SK-N-SH (cell line): ENCODE measurements at regions of chr2 and their contacts with region 1.

Region 1: GRCh38 chr2:117814417-117815264 is at the start of gene DDX18:
- DNase-seq: peak; percentile 88
- H3K4me3 ChIP-seq: peak within 1 kb of the TSS; percentile 88
- H3K27ac ChIP-seq: peak within 1 kb of the TSS; percentile 81
- H3K4me1 ChIP-seq: peaks cover 0 to 14% of the 10 kb centered on the region in 2 experiments; a peak in 2 of 4 replicates
- H3K27me3 ChIP-seq: no peaks in the 10 kb centered on the region
- CTCF ChIP-seq: peak; percentile 99
- EP300 ChIP-seq: peak in 1 of 2 experiments; percentile 23; a peak in 2 of 4 replicates
- RAD21 ChIP-seq: peak; percentile 71
- polyA plus RNA-seq, gene DDX18: 24.1 and 40.6 TPM in 2 replicates

Region 2: GRCh38 chr2:117801826-117802225 is 12.8 kb before region 1 on chr2:
- CTCF ChIA-PET with region 1: interaction called, 15 read pairs
- POLR2A ChIA-PET with region 1: no interaction called
- DNase-seq: no peak
- H3K4me3 ChIP-seq: no peak overlapping the region
- H3K27ac ChIP-seq: no peak overlapping the region
- H3K4me1 ChIP-seq: no peaks in the 10 kb centered on the region
- H3K27me3 ChIP-seq: no peaks in the 10 kb centered on the region
- CTCF ChIP-seq: no peak
- EP300 ChIP-seq: no peak
- RAD21 ChIP-seq: no peak

Region 3: DNA sequence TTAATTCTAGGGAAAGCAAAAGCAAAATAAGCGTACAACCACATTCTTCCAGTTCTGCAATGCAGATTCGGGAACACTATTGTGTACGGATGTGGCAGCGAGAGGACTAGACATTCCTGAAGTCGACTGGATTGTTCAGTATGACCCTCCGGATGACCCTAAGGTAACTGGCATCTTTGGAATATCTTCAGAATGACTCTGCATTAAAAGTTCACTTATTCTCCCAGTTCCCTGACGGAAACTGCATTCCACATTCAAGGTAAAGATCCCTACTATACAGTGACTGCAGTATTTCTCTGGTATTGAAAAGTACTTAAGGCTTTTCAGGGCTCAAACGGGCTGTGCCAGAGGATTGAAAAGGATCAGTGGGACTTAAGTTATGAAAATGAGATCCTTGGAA is 10.8 kb after region 1 on chr2:
- CTCF ChIA-PET with region 1: interaction called, 11 read pairs
- POLR2A ChIA-PET with region 1: no interaction called
- DNase-seq: no peak
- H3K4me3 ChIP-seq: no peak overlapping the region
- H3K27ac ChIP-seq: no peak overlapping the region
- H3K4me1 ChIP-seq: no peaks in the 10 kb centered on the region
- H3K27me3 ChIP-seq: no peaks in the 10 kb centered on the region
- CTCF ChIP-seq: no peak
- EP300 ChIP-seq: no peak
- RAD21 ChIP-seq: no peak

Region 4: DNA sequence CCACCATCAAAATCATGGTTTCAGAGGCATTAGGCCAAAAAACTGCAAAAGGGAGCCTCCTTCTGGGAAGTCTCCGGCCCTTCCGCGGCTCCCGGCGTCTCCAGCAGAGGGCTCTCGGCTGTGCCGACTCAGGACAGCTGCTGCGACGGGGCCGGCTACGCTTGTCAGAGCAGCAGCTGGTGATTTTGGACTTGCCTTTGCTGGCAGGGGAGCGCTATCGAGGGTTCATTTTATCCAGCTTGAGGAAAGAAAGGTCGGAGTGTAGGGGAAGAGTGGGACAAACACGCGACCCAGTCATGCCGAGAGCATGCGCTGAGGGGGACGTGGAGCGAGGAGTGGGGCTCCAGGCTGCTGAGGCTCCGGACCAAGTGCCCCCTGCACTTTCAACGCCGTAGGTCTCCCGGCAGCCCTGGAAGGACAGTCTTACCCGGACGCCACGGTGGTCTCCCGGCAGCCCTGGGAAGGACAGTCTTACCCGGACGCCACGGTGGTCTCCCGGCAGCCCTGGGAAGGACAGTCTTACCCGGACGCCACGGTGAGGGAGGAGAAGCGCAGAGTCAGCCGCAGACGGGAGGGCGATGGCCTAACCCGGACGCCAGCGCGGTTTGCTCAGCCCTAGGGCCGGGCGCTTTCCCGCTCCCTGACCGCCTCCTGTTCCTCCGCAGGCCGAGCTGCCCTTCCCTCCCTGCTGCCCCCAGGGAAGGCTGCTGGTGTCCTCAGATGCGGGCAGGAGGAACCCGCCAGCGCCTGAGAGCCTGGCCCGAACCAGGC is 21.5 kb after region 1 on chr2:
- CTCF ChIA-PET with region 1: interaction called, 37 read pairs
- POLR2A ChIA-PET with region 1: no interaction called
- DNase-seq: peak; percentile 86
- H3K4me3 ChIP-seq: peak overlapping the region in 1 of 2 experiments; percentile 48; a peak in 1 of 4 replicates
- H3K27ac ChIP-seq: no peak overlapping the region
- H3K4me1 ChIP-seq: peaks cover 0 to 10% of the 10 kb centered on the region in 2 experiments; a peak in 1 of 4 replicates
- H3K27me3 ChIP-seq: no peaks in the 10 kb centered on the region
- CTCF ChIP-seq: peak; percentile 81
- EP300 ChIP-seq: no peak
- RAD21 ChIP-seq: peak; percentile 63

Region 5: GRCh38 chr2:117850015-117850414 is 35.4 kb after region 1 on chr2:
- CTCF ChIA-PET with region 1: interaction called, 12 read pairs
- POLR2A ChIA-PET with region 1: no interaction called
- DNase-seq: no peak
- H3K4me3 ChIP-seq: no peak overlapping the region
- H3K27ac ChIP-seq: no peak overlapping the region
- H3K4me1 ChIP-seq: 0 out of 4 replicates have a peak, but pooled peaks cover 0 to under 1% of the 10 kb centered on the region in 2 experiments
- H3K27me3 ChIP-seq: no peaks in the 10 kb centered on the region; the same call in 1 of the 2 replicates
- CTCF ChIP-seq: no peak
- EP300 ChIP-seq: no peak
- RAD21 ChIP-seq: no peak

Region 6: DNA sequence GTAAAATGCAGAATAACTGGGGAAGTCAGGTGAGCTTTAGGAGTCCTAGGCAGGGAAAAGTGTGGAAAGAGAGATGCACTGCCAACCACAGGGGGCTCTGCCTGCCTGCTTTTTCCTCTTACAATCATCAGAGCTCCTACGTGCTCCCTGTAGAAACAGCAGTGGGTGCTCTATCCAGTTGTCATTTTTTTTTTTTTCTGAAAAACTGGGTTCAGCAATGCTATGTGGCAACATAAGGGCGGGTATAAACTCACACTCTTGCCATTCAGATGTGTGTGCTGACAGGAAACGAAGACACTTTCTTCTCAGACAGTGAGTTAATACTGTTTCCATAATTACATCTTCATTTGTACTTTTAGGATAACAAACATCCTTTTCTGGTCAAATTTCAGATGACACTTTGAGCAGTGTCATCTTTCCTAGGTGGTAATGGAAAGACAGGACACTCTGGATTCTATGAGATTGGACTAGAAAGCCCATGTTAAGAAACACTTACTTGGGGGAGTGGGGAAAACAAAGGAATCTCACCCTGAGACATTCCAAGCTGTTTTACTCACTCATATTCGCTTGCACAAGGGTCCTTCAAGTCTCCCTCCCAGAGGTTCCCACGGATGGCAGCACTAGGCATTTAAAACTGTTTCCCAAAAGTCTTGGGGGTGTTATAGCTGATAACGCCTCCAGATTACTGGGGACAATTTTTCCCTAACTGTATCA is 157.9 kb after region 1 on chr2:
- CTCF ChIA-PET with region 1: interaction called, 14 read pairs
- POLR2A ChIA-PET with region 1: no interaction called
- DNase-seq: no peak
- H3K4me3 ChIP-seq: no peak overlapping the region
- H3K27ac ChIP-seq: peak overlapping the region; percentile 78 to 80; a peak in 3 of 4 replicates
- H3K4me1 ChIP-seq: peaks cover 7 to 35% of the 10 kb centered on the region in 2 experiments
- H3K27me3 ChIP-seq: no peaks in the 10 kb centered on the region
- CTCF ChIP-seq: peak; percentile 23; the same call in 1 of the 2 replicates
- EP300 ChIP-seq: no peak
- RAD21 ChIP-seq: no peak

Region 7: GRCh38 chr2:117997872-117998454 is 183.3 kb after region 1 on chr2:
- CTCF ChIA-PET with region 1: interaction called, 75 read pairs
- POLR2A ChIA-PET with region 1: interaction called, 4 read pairs
- DNase-seq: no peak
- H3K4me3 ChIP-seq: no peak overlapping the region
- H3K27ac ChIP-seq: no peak overlapping the region
- H3K4me1 ChIP-seq: no peaks in the 10 kb centered on the region; a peak in 2 of 4 replicates
- H3K27me3 ChIP-seq: no peaks in the 10 kb centered on the region
- CTCF ChIP-seq: no peak
- EP300 ChIP-seq: no peak
- RAD21 ChIP-seq: no peak